ENCODE measurements at regions of chr5 and their contacts with region 1.

Region 1: DNA sequence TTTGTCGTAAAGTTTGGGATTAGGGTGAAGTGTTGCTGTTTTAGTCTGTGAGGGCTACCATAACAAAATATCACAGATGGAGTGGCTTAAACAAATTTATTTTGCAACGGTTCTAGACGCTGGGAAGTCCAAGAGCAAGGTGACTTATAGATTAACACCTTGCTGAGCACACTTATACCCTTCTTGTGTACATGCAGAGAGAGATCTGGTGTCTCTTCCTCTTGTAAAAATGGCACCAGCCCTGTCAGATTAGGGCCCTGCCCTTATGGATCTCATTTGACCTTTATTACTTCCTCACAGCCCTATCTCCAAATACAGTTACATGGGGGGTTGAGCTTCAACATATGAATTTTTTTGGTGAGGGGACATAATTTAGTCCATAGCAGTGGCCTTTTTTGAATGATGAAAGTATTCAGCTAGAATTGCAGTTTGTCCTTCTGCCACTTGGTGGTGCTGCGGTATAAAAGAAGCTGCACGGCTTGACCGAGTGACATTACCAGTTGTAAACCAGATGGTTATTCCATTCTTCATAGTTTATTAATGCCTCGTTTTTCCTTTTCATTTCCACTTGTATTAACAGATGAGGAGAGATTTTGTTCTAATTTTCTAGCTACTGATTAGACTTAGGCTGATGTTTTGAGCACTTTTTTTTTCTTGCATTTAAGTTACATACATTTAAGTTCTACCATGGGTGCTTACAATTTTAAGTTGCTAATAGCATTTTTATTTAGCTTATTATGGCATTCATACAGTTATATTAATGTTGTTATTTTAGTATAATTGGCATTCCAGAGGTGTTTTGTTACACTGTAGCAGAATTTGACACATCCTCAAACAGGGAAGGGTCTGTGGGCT is 19.4 kb downstream of the DCP2 start:
- DNase-seq: peak; percentile 82
- ATAC-seq: peak; percentile 82
- H3K4me3 Mint-ChIP-seq: no peak overlapping the region
- H3K27ac Mint-ChIP-seq: no peak overlapping the region
- H3K4me1 Mint-ChIP-seq: peaks cover 19% of the 10 kb centered on the region
- H3K27me3 Mint-ChIP-seq: no peaks in the 10 kb centered on the region

Region 2: DNA sequence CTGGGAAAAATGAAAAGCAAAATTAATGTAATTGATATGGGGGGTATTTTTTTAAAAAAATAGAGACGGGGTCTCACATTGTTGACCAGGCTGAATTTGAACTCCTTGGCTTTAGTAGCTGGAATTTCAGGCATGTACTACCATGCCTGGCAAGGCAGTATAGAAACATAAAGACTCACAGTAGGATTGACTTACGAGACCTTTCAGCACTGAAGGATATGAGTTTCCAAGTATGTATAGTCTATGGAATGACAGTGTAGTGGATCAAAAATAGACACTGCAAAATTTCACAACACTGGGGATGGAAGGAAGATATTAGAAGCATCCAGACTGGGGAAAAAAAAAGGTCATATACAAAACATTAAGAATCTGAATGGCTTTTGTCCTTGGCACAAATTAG is 12.6 kb before region 1 on chr5:
- CTCF ChIA-PET with region 1: interaction called, 63 read pairs
- POLR2A ChIA-PET with region 1: no interaction called
- DNase-seq: no peak
- ATAC-seq: no peak
- H3K4me3 Mint-ChIP-seq: no peak overlapping the region
- H3K27ac Mint-ChIP-seq: no peak overlapping the region
- H3K4me1 Mint-ChIP-seq: peaks cover 59% of the 10 kb centered on the region
- H3K27me3 Mint-ChIP-seq: no peaks in the 10 kb centered on the region

Region 3: DNA sequence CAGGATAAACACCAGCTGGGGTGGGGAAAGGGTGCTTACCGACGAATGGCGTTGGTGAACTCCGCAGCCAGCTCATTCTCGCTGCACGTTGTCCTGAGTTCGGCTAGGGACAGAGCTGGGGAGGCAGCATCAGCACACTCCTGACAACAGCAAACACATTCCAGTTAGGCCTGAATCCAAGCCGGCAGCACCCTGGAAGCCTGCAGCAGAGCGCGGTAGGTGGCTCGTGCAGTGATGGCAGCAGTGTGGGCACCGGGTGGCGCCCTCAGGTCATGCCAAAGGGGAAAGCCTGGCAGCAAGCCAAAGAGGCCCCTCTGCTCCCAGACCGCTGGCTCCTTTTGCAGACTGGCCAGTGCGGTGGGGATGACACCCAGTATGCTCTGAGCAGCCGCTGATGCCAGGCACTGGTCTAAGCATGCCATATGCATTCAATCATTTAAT is 47.5 kb after region 1 on chr5:
- CTCF ChIA-PET with region 1: interaction called, 19 read pairs
- POLR2A ChIA-PET with region 1: no interaction called
- DNase-seq: peak; percentile 47
- ATAC-seq: peak; percentile 53
- H3K4me3 Mint-ChIP-seq: no peak overlapping the region
- H3K27ac Mint-ChIP-seq: no peak overlapping the region
- H3K4me1 Mint-ChIP-seq: no peaks in the 10 kb centered on the region
- H3K27me3 Mint-ChIP-seq: no peaks in the 10 kb centered on the region

Region 4: DNA sequence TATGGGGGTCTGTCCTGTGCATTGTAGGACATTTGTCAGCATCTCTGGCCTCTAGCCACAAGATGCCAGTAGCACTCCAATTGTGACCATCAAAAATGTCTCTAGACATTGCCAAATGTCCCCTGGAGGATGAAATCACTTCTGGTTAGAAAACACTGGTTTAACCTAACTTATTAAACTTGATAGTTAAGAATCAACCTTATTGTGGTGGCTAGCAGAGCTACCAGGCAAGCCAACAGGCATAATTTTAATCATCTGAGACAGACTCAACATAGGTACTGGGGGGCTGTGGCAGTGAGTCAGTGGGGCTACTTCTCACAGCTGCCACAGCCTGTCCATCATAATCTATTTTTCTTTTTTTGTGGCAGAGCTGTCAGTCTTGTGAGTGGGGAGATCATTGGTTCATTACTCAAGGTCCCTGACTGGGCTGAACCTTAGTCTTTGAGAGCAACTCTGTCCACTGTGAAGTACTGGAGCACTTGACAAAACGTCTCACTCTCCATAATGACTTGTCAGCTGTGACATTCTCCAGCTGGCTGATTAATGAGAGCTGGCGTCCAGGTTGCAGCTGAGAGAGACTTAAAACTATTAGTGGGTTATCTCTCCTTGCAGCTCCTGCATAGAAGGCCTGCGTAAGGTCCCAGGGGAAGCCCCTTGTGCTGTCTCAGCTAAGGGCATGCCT is 88.6 kb after region 1 on chr5:
- CTCF ChIA-PET with region 1: interaction called, 11 read pairs
- POLR2A ChIA-PET with region 1: no interaction called
- DNase-seq: no peak
- ATAC-seq: no peak
- H3K4me3 Mint-ChIP-seq: no peak overlapping the region
- H3K27ac Mint-ChIP-seq: no peak overlapping the region
- H3K4me1 Mint-ChIP-seq: no peaks in the 10 kb centered on the region
- H3K27me3 Mint-ChIP-seq: no peaks in the 10 kb centered on the region

Region 5: DNA sequence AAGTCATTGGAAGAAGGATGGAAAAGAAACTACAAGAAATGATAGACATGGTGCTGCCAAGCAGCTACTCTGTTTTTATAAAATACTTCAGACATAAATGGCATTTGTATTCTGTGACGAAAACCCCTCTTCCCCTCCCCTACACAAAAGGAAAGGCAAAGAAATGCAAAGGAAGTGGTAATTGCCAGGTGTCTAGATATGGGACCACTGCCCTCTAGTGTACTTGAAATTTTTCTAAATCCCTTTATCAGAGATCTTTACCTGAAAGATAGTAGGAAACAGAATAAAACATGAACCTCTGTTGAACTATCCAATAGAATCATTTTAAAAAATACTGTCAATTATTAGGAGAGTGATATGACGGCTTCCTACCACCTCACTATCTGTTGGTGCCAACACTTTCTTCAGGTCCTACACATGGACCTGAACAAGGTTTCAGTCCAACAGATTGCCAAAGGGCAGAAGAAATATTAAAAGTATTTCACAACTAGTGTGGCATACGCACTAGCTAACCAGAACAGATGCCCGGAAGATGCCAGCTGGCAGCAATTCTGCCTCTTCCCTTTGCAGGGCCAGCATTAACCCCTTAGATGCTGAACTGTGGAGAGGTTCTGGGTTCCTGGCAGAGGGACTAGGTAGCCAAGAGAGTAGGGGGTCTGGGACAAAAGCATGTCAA is 334.7 kb after region 1 on chr5:
- CTCF ChIA-PET with region 1: interaction called, 83 read pairs
- POLR2A ChIA-PET with region 1: interaction called, 3 read pairs
- DNase-seq: peak; percentile 52
- ATAC-seq: peak; percentile 69
- H3K4me3 Mint-ChIP-seq: no peak overlapping the region
- H3K27ac Mint-ChIP-seq: peak overlapping the region; percentile 25
- H3K4me1 Mint-ChIP-seq: peaks cover 26% of the 10 kb centered on the region
- H3K27me3 Mint-ChIP-seq: peaks cover 2% of the 10 kb centered on the region

Measured in activated CD8-positive, alpha-beta T cell treated with anti-CD3 and anti-CD28 coated beads, Interleukin-2, amount 10 ng/mL, durations not matched to agents 7 days and 5 days (primary cell).